Left cardiac atrium (tissue), 4 donors: ENCODE measurements at regions of chr18 and their contacts with region 1.

Region 1: GRCh38 chr18:55589625-55590291 is 1.8 kb upstream of the TCF4 start:
- DNase-seq: peak; percentile 97
- ATAC-seq: peak; percentile 97 to 98

Region 2: GRCh38 chr18:55234366-55235093 is 355.2 kb before region 1 on chr18:
- intact Hi-C with region 1: loop called in 1 of 2 experiments (anchors 10 kb)
- DNase-seq: peak; percentile 83
- ATAC-seq: peak; percentile 91 to 93

Region 3: DNA sequence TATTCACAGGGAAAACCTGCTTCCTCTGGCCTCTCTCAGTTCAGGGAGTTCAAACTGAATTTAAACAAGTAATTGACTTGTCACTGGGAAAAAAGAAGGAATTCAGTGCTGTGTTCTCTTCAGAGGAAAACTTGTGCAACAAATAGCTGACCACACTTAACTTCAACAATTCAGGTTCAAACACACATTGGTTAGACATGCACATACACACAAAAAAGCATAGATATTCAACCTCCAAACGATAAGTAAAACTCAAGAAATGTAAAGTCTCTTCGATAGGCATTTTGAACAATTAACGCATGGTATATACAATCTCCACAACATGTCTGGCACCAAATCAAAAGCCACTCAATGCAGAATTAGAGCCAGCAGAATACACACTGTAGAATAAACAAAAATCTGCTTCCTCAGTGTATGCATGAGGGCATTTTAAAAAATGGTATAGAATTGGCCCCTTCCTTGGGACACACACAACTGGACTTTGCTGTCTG is 270.8 kb before region 1 on chr18:
- intact Hi-C with region 1: no loop called
- DNase-seq: no peak
- ATAC-seq: no peak

Region 4: DNA sequence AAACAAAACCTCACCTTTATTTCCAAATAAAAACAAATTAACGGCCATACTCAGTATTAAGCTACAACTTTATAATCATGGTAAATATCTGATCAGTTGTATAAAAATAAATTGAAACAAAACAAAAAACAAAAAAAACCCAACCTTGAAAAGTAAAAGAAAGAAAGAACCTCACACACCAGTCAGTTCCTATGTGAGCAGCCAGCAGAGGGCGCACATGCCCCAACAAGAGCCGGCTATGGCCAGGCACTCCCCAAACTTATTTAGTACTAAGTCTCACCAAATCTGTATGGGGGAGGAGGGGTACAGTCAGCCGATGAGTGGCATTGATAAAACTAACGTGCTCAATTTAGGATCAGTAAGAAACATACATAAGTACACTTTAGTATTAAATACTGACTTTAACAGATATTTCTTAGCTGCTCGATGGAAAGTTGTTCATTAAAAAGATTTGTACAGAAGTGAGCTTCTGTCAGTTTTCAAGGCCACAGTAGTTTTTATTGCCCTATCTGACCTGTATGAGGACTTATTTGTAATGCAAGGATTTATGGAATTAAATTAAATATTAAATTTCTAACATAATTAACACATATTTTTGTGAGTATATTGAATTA is 174.4 kb before region 1 on chr18:
- intact Hi-C with region 1: loop called (anchors 5 to 10 kb)
- DNase-seq: peak; percentile 93
- ATAC-seq: peak; percentile 93 to 95

Region 5: GRCh38 chr18:55509631-55510324 is 80.0 kb before region 1 on chr18:
- intact Hi-C with region 1: loop called in 1 of 2 experiments (anchors 10 kb)
- DNase-seq: no peak
- ATAC-seq: peak; percentile 50 to 69

Region 6: DNA sequence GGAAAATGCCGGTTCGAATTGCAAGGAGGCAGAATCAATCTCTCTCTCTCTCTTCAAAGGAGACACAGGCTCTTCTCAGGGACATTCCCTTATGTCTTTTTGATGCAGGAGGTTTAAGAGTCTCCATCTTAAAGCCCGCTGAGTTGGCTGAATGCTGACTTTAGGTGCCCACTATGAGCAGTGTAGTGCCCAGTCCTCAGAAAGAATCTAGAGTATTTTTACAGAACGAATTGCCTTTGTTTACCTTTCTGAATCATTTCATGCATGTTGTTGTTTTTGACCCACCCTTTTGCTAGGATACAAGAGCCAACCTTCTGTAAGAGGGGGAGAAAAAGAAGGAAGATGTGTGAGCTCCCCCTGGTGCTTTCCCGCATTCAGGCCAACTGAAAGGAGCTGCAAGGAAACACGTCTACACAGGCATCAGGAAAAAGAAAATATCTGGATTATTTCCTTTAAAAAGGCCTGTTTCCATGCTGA is 191.8 kb after region 1 on chr18:
- intact Hi-C with region 1: loop called (anchors 5 kb)
- DNase-seq: peak; percentile 52
- ATAC-seq: peak; percentile 39 to 54

Region 7: DNA sequence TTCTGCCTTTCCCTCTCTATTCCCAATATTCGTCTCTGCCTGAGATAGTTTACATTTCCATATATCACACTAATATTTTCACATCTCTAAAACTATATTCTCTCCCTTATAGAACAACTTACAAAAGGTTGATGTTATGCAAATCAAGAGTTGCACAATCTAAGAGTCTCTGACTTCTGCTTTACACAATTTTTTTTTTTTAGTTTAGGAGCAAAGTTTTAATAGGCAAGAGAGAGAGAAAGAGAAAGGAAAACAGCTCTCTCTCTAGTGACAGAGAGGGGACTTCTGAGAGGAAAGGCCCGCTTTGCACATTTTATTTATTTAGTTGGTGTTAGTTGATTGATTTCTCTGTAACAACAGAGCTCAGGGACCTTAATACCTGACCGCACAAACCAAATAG is 668.4 kb after region 1 on chr18:
- intact Hi-C with region 1: no loop called
- DNase-seq: no peak
- ATAC-seq: no peak